ENCODE measurements at regions of chr1 and their contacts with region 1.

Region 1: DNA sequence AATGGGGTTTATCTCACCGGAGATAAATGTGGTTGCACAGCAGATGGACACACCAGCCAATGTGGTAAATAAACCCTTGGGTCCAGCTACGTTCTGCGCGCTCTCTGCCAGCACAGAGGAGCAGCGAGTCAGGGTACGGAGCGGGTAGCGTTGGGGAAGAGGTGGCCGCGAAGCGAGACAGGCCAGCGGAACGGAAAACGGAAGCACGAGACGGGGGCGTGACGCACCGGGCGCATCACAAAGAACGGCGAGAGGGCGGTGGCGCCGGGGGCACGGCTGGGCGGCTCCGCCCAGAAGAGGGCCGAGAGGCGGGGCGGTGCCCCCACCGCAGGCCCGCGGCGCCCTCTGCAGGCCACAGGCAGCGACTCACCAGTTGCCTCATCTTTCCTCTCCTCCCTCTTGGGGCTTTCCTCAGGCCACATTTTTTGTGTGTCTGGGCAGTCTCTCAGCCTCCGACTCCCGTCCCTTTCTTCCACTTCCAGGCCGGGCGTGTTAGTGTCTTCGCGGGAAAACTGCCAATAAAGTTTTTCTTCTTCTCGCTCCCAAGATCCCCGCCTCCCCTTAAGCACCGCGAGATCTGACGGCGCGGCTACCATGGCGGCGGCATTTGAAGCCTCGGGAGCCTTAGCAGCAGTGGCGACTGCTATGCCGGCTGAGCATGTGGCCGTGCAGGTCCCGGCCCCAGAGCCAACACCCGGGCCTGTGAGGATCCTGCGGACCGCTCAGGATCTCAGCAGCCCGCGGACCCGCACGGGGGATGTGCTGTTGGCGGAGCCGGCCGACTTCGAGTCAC is at the start of gene DDX20:
- DNase-seq: peak; percentile 95
- H3K4me3 Mint-ChIP-seq: peak within 1 kb of the TSS; percentile 82
- H3K27ac Mint-ChIP-seq: peak within 1 kb of the TSS; percentile 97
- H3K4me1 Mint-ChIP-seq: peaks cover 34% of the 10 kb centered on the region
- H3K27me3 Mint-ChIP-seq: no peaks in the 10 kb centered on the region
- total RNA-seq, gene DDX20: 11.4 to 13.3 TPM

Region 2: DNA sequence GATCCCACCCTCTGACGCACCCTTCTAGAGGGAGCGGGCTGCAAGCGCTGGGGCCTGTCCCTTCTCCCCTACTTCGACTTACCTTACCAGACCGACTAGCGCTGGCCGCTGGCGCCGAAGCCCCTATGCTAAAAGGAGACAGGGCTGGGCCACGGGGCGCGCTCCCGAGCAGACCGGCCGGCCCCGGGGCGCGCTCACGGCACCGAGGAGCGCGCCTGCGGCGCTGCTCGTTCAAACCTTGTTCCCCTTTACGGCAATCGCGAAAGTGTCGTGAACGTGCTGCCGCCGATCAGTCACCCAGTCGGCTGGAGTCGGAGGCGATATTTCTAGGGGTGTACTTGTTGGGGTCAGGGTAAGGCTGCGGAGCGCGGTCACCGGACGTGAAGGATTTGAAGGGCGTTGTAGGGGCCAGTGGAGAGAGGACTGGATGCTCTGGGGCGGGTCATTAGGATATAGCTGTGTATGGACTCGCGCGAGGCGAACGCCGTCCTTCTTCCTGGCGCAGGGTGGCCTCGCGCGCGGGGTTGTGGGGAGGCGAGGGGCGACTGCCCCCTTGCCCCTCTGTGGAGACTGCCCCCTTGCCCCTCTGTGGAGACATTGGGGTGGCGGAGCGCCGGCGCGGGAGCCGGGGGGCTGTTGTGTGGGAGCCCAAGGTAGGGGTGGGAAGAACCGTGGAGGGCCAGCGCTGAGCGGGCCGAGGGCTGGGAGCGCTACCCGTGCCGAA is 615.4 kb before region 1 on chr1 and contains the starts of genes CEPT1 and DRAM2:
- CTCF ChIA-PET with region 1: no interaction called
- intact Hi-C with region 1: loop called (anchors 5 kb)
- DNase-seq: peak; percentile 98
- H3K4me3 Mint-ChIP-seq: peak within 1 kb of the TSS; percentile 94
- H3K27ac Mint-ChIP-seq: peak within 1 kb of the TSS; percentile 91
- H3K4me1 Mint-ChIP-seq: peaks cover 49% of the 10 kb centered on the region
- H3K27me3 Mint-ChIP-seq: no peaks in the 10 kb centered on the region
- total RNA-seq, gene CEPT1: 29.0 to 30.3 TPM
- total RNA-seq, gene DRAM2: 27.7 to 31.1 TPM

Region 3: GRCh38 chr1:111448918-111449702 is 306.4 kb before region 1 on chr1 and contains the starts of genes ATP5PB and WDR77:
- CTCF ChIA-PET with region 1: interaction called, 6 read pairs
- intact Hi-C with region 1: loop called (anchors 1 kb)
- DNase-seq: peak; percentile 96
- H3K4me3 Mint-ChIP-seq: peak within 1 kb of the TSS; percentile 100
- H3K27ac Mint-ChIP-seq: peak within 1 kb of the TSS; percentile 96
- H3K4me1 Mint-ChIP-seq: peaks cover 71% of the 10 kb centered on the region
- H3K27me3 Mint-ChIP-seq: no peaks in the 10 kb centered on the region
- total RNA-seq, gene ATP5PB: 324 to 331 TPM
- total RNA-seq, gene WDR77: 43.1 to 48.8 TPM

Region 4: DNA sequence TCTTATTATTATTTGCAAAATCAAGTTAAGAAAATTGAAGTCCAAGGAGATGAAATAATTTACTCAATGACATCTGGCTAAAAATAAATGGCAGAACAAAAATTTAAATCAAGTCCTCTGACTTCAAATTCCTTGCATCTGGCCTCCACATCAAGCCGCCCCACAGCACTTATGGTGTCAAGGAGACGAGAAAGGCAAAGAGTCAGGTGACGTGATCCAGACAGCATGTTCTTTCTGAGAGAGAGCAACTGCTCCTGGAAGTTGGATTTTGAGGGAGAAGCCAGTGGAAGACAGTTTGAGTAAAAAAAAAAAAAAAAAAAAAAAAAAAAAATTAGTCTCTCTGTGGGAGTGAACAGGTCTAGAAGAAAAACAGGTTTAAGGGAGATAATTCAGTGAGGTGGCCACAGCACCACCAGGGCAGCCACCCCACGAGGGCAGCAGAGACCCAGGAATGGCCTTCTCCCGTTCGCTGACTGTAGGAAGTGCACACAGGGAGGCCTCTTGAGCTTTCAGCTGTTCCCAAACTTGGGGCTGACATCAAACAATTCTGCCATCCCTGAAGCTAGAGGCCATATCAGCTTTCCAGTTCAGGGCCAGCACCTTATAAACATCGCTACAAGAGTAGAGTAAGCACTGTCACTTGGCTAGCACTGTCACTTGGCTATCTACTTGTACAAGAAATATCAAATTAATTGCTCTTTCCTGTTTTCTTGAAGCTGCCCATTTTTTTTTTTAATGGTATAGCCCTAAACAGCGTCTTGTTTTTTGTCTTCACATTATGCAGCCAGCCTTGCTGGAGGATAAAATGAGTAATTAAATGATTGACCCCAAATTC is 273.9 kb before region 1 on chr1:
- CTCF ChIA-PET with region 1: interaction called, 5 read pairs
- intact Hi-C with region 1: loop called (anchors 1 kb)
- DNase-seq: peak; percentile 87
- H3K4me3 Mint-ChIP-seq: no peak overlapping the region
- H3K27ac Mint-ChIP-seq: no peak overlapping the region
- H3K4me1 Mint-ChIP-seq: peaks cover 29% of the 10 kb centered on the region
- H3K27me3 Mint-ChIP-seq: no peaks in the 10 kb centered on the region

Region 5: DNA sequence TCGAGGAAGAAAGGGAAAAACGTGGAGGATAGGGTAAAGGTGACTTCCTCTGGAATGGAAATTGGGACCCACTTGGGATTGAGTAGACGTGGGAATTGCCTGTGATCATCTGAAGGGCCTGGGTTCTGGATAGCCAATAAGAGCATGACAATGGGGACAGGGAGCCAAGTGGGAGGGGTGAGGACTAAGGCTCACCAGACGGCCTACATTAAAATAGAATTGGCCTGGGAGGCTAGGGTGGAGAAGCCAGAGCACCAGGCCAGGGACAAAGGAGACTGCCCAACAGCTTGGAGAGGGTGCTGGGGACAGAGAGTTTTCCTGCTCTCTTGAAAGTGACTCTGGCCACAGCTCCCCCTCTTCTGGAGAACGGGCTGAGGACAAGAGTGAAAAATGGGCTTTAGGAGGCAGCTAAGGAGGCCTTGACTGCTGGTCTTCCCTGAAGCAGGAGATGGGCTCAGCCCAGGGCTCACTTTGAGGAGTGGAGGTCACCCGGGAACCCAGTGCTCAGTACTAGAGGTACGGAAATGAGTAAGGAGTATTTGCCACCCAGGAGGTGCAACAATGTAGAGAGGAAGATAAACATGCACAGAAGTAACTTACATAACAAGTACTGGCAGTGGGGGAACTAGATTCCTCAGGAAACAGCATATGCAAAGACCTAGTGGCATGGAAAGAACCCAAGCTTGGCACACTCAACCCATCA is 35.1 kb before region 1 on chr1:
- CTCF ChIA-PET with region 1: interaction called, 14 read pairs
- intact Hi-C with region 1: loop called (anchors 1 kb)
- DNase-seq: no peak
- H3K4me3 Mint-ChIP-seq: no peak overlapping the region
- H3K27ac Mint-ChIP-seq: no peak overlapping the region
- H3K4me1 Mint-ChIP-seq: peaks cover 11% of the 10 kb centered on the region
- H3K27me3 Mint-ChIP-seq: no peaks in the 10 kb centered on the region

Region 6: DNA sequence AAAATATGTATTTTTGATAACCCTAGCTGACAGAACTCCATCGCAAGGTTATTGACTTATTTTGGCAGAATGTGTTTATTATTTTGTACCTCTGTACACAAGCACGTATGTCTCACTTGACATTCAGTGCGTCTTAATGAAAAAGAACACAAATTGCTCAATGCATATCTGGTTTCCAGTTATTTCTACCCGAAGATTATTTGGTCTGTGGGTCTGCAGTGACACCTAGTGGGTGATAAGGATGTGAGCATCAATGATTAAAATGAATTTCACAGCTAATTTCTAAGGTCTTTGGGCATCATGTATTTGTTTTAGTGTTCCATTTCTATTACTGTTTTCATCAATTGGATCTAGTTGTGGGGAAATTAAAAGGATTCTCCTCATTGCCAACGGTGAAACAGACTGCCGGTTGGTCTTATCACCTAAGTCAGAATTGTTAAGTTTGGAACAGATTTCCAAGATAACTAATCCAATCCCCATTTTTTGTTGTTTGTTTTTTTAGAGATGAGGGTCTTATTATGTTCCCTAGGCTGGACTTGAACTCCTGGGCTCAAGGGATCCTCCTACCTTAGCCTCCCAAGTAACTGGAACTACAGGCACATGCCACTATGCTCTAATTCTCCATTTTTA is 14.1 kb after region 1 on chr1:
- CTCF ChIA-PET with region 1: interaction called, 9 read pairs
- intact Hi-C with region 1: loop called (anchors 1 kb)
- DNase-seq: peak; percentile 67
- H3K4me3 Mint-ChIP-seq: no peak overlapping the region
- H3K27ac Mint-ChIP-seq: no peak overlapping the region
- H3K4me1 Mint-ChIP-seq: peaks cover 12% of the 10 kb centered on the region
- H3K27me3 Mint-ChIP-seq: no peaks in the 10 kb centered on the region

Region 7: GRCh38 chr1:111990878-111991718 is 235.6 kb after region 1 on chr1:
- CTCF ChIA-PET with region 1: no interaction called
- intact Hi-C with region 1: no loop called
- DNase-seq: peak; percentile 33
- H3K4me3 Mint-ChIP-seq: peak overlapping the region; percentile 2
- H3K27ac Mint-ChIP-seq: no peak overlapping the region
- H3K4me1 Mint-ChIP-seq: peaks cover 19% of the 10 kb centered on the region
- H3K27me3 Mint-ChIP-seq: peaks cover 58% of the 10 kb centered on the region